Activated naive CD8-positive, alpha-beta T cell treated with anti-CD3 and anti-CD28 coated beads, Interleukin-2, amount 10 ng/mL, durations not matched to agents 7 days and 5 days (primary cell): ENCODE measurements at regions of chr9 and their contacts with region 1.

Region 1: GRCh38 chr9:71911253-71912074 is at the start of gene C9orf85:
- DNase-seq: peak; percentile 93
- ATAC-seq: peak; percentile 93
- H3K4me3 Mint-ChIP-seq: peak within 1 kb of the TSS; percentile 99
- H3K27ac Mint-ChIP-seq: peak within 1 kb of the TSS; percentile 99
- H3K4me1 Mint-ChIP-seq: peaks cover 39% of the 10 kb centered on the region
- H3K27me3 Mint-ChIP-seq: no peaks in the 10 kb centered on the region
- total RNA-seq, gene C9orf85: 9.2 to 11.3 TPM

Region 2: GRCh38 chr9:71783120-71783530 is 128.3 kb before region 1 on chr9:
- POLR2A ChIA-PET with region 1: interaction called, 10 read pairs
- DNase-seq: peak; percentile 78
- ATAC-seq: peak; percentile 94
- H3K4me3 Mint-ChIP-seq: peak overlapping the region; percentile 84
- H3K27ac Mint-ChIP-seq: peak overlapping the region; percentile 100
- H3K4me1 Mint-ChIP-seq: peaks cover 37% of the 10 kb centered on the region
- H3K27me3 Mint-ChIP-seq: peaks cover 2% of the 10 kb centered on the region

Region 3: GRCh38 chr9:71795097-71795813 is 116.2 kb before region 1 on chr9:
- POLR2A ChIA-PET with region 1: interaction called, 10 read pairs
- DNase-seq: no peak
- ATAC-seq: peak; percentile 89
- H3K4me3 Mint-ChIP-seq: peak overlapping the region; percentile 84
- H3K27ac Mint-ChIP-seq: peak overlapping the region; percentile 99
- H3K4me1 Mint-ChIP-seq: peaks cover 33% of the 10 kb centered on the region
- H3K27me3 Mint-ChIP-seq: no peaks in the 10 kb centered on the region

Region 4: GRCh38 chr9:71897577-71897976 is 13.9 kb before region 1 on chr9:
- POLR2A ChIA-PET with region 1: interaction called, 60 read pairs
- DNase-seq: no peak
- ATAC-seq: peak; percentile 79
- H3K4me3 Mint-ChIP-seq: peak overlapping the region; percentile 74
- H3K27ac Mint-ChIP-seq: peak overlapping the region; percentile 86
- H3K4me1 Mint-ChIP-seq: peaks cover 72% of the 10 kb centered on the region
- H3K27me3 Mint-ChIP-seq: no peaks in the 10 kb centered on the region

Region 5: GRCh38 chr9:72025931-72026342 is 114.5 kb after region 1 on chr9:
- POLR2A ChIA-PET with region 1: interaction called, 14 read pairs
- DNase-seq: no peak
- ATAC-seq: no peak
- H3K4me3 Mint-ChIP-seq: no peak overlapping the region
- H3K27ac Mint-ChIP-seq: peak overlapping the region; percentile 26
- H3K4me1 Mint-ChIP-seq: peaks cover 8% of the 10 kb centered on the region
- H3K27me3 Mint-ChIP-seq: no peaks in the 10 kb centered on the region